IMR-90 (cell line): ENCODE measurements at regions of chr14 and their contacts with region 1.

Region 1: DNA sequence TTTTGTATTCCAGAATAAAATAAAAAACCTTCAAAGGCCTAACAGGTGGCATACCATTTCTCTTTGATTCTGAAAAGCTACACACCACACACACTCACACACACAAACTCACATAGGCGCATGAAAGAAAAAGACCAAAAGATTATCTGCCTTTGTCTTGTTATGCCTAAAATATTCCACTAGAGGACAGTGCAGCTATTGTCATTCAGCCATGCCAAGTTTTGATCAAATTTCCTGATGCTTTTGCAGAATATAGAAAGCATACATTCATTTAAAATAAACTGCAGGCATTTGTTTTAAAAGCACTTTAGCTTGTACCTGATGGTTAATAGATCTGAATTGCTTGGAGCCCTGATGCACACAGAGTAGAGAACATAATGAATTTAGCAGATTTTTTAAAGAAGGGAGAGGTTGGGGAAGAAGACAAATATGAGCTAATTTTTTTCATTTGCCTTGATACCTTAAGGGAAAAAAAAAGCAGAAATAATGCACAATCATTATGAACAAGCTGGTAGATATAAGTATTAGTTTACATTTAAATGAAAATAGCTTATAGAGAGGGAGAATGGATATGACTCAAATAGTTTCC is 1766.9 kb upstream of the SEL1L start:
- DNase-seq: peak; percentile 52
- ATAC-seq: peak; percentile 81
- H3K4me3 ChIP-seq: no peak overlapping the region
- H3K27ac ChIP-seq: no peak overlapping the region
- H3K4me1 ChIP-seq: no peaks in the 10 kb centered on the region
- H3K27me3 ChIP-seq: no peaks in the 10 kb centered on the region
- CTCF ChIP-seq: peak; percentile 94
- POLR2A ChIP-seq: 0 out of 2 replicates have a peak, but pooled peaks have one; percentile 36
- RAD21 ChIP-seq: peak; percentile 95

Region 2: DNA sequence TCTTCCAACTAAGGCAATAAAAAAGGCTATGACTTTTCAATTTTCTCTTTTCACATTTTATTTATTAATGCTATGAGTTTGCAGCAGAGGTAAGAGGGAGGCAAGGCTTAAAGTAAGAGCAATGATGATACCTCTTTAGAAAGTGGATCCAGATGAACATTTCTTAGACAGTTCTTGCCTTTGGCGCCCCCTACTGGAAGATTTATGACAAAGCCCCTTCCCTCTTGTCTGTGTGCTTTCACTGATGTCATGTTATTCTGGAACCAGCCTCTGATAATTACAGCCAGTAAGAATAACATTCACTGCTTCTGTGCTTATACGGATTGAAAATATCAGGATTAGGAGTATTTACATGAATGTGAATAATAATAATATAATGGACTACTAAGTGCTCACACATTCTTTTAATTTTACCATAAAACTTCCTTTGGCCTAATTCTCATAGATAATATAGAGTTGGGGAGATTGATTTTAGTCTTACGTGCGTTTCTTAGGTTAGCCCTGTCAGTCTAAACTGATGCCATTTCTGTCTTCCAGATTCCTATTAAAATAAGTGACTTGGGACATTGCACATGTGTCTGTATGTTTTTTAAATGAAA is 163.0 kb after region 1 on chr14:
- CTCF ChIA-PET with region 1: interaction called, 4 read pairs
- POLR2A ChIA-PET with region 1: no interaction called
- dilution Hi-C with region 1: no loop called
- in situ Hi-C with region 1: loop called (anchors 10 kb)
- intact Hi-C with region 1: loop called (anchors 1 kb)
- DNase-seq: peak; percentile 70
- ATAC-seq: peak; percentile 70
- H3K4me3 ChIP-seq: no peak overlapping the region
- H3K27ac ChIP-seq: no peak overlapping the region
- H3K4me1 ChIP-seq: no peaks in the 10 kb centered on the region
- H3K27me3 ChIP-seq: no peaks in the 10 kb centered on the region
- CTCF ChIP-seq: peak; percentile 73
- POLR2A ChIP-seq: no peak
- RAD21 ChIP-seq: peak; percentile 76

Region 3: DNA sequence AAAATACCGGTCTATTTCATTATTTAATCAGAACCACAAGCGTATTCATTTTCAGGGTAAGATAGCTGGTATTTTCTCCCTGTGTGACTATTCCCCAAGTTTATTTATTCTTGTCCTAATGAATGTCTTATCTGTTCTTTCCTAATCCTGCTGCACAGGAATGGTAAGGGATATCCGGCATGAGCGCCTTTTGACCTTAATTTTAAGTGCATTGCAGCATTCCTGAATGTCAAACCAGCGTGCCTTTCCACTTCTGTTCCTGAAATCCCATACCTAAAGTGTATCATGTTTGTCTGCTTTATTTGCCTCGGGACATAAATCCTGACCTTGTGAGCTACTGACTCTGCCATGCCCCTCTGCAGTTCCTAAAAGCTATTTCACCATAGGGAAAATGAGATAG is 516.2 kb after region 1 on chr14:
- CTCF ChIA-PET with region 1: no interaction called
- POLR2A ChIA-PET with region 1: no interaction called
- dilution Hi-C with region 1: no loop called
- in situ Hi-C with region 1: no loop called
- intact Hi-C with region 1: loop called (anchors 5 kb)
- DNase-seq: peak; percentile 74
- ATAC-seq: peak; percentile 90
- H3K4me3 ChIP-seq: no peak overlapping the region
- H3K27ac ChIP-seq: no peak overlapping the region
- H3K4me1 ChIP-seq: peaks cover 1% of the 10 kb centered on the region; the same call in 1 of the 2 replicates
- H3K27me3 ChIP-seq: no peaks in the 10 kb centered on the region
- CTCF ChIP-seq: no peak
- POLR2A ChIP-seq: no peak
- RAD21 ChIP-seq: no peak

Region 4: GRCh38 chr14:84006643-84007155 is 706.1 kb after region 1 on chr14:
- CTCF ChIA-PET with region 1: no interaction called
- POLR2A ChIA-PET with region 1: no interaction called
- dilution Hi-C with region 1: no loop called
- in situ Hi-C with region 1: no loop called
- intact Hi-C with region 1: loop called (anchors 5 kb)
- DNase-seq: no peak
- ATAC-seq: no peak
- H3K4me3 ChIP-seq: no peak overlapping the region
- H3K27ac ChIP-seq: no peak overlapping the region
- H3K4me1 ChIP-seq: no peaks in the 10 kb centered on the region
- H3K27me3 ChIP-seq: no peaks in the 10 kb centered on the region
- CTCF ChIP-seq: 0 out of 2 replicates have a peak, but pooled peaks have one; percentile 1
- POLR2A ChIP-seq: no peak
- RAD21 ChIP-seq: no peak

Region 5: GRCh38 chr14:84087986-84088531 is 787.5 kb after region 1 on chr14:
- CTCF ChIA-PET with region 1: no interaction called
- POLR2A ChIA-PET with region 1: no interaction called
- dilution Hi-C with region 1: no loop called
- in situ Hi-C with region 1: no loop called
- intact Hi-C with region 1: loop called (anchors 10 kb)
- DNase-seq: peak; percentile 77
- ATAC-seq: peak; percentile 84
- H3K4me3 ChIP-seq: no peak overlapping the region
- H3K27ac ChIP-seq: peak overlapping the region; percentile 91; the same call in 1 of the 2 replicates
- H3K4me1 ChIP-seq: peaks cover 2% of the 10 kb centered on the region; the same call in 1 of the 2 replicates
- H3K27me3 ChIP-seq: no peaks in the 10 kb centered on the region
- CTCF ChIP-seq: no peak
- POLR2A ChIP-seq: no peak
- RAD21 ChIP-seq: no peak

Region 6: GRCh38 chr14:85195872-85196477 is 1895.4 kb after region 1 on chr14:
- CTCF ChIA-PET with region 1: no interaction called
- POLR2A ChIA-PET with region 1: no interaction called
- dilution Hi-C with region 1: no loop called
- in situ Hi-C with region 1: no loop called
- intact Hi-C with region 1: loop called (anchors 10 kb)
- DNase-seq: peak; percentile 11
- ATAC-seq: peak; percentile 48; the same call in 1 of the 2 replicates
- H3K4me3 ChIP-seq: no peak overlapping the region
- H3K27ac ChIP-seq: no peak overlapping the region
- H3K4me1 ChIP-seq: no peaks in the 10 kb centered on the region
- H3K27me3 ChIP-seq: no peaks in the 10 kb centered on the region
- CTCF ChIP-seq: peak; percentile 55
- POLR2A ChIP-seq: no peak
- RAD21 ChIP-seq: peak; percentile 60